Right ventricle myocardium inferior (tissue), 1 donor: ENCODE measurements at regions of chr1 and their contacts with region 1.

Region 1: DNA sequence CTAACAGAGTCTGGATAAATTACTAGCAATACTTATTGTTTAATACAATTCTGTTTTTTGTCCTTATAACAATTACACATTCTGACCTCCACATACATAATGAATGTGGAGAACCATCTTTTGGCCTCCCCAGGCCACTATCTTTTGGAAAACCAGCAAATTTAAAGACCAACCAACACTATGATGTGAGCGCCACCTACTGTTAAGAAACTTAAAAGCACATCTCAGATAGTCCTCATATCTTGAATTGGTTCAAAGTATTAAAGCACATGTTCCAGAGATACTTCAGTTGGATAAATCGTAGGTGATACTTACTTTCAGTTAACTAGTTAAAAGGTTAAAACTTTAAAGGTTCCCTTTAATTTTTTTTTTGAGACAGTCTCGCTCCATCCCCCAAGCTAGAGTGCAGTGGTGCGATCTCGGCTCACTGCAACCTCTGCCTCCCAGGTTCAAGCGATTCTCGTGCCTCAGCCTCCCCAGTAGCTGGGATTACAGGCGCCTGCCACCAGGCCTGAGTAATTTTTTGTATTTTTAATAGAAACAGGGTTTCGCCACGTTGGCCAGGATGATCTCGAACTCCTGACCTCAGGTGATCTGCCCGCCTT is 29.3 kb upstream of the USP1 start:
- DNase-seq: no peak
- ATAC-seq: peak; percentile 26

Region 2: DNA sequence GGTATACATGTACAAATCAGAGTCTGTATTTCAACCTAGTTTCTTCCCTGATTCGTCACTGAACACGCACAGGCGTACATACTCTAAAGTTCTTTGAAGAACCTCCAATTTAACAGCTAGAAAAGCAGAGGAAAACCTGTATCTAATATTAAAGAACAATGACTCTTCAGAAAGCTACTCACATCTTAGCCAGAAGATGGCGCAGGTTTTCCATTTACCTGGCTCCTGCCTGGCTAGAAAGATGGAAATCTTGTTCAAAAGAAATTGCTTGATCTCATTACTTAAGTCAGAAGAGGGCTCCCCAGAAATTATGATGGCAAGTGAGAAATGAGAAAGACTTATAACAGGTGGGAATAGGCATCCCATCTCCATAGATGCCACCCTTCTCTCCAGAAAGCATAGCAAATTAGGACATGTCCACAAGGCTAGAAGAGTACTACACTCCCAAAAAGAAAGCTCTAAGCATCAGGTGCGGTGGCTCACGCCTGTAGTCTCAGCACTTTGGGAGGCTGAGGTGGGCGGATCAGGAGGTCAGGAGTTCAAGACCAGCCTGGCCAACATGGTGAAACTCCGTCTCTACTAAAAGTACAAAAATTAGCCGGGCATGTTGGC is 231.8 kb before region 1 on chr1:
- intact Hi-C with region 1: loop called (anchors 1 kb)
- DNase-seq: no peak
- ATAC-seq: no peak

Region 3: GRCh38 chr1:62295921-62296491 is 111.5 kb before region 1 on chr1:
- intact Hi-C with region 1: loop called (anchors 10 kb)
- DNase-seq: no peak
- ATAC-seq: no peak

Region 4: DNA sequence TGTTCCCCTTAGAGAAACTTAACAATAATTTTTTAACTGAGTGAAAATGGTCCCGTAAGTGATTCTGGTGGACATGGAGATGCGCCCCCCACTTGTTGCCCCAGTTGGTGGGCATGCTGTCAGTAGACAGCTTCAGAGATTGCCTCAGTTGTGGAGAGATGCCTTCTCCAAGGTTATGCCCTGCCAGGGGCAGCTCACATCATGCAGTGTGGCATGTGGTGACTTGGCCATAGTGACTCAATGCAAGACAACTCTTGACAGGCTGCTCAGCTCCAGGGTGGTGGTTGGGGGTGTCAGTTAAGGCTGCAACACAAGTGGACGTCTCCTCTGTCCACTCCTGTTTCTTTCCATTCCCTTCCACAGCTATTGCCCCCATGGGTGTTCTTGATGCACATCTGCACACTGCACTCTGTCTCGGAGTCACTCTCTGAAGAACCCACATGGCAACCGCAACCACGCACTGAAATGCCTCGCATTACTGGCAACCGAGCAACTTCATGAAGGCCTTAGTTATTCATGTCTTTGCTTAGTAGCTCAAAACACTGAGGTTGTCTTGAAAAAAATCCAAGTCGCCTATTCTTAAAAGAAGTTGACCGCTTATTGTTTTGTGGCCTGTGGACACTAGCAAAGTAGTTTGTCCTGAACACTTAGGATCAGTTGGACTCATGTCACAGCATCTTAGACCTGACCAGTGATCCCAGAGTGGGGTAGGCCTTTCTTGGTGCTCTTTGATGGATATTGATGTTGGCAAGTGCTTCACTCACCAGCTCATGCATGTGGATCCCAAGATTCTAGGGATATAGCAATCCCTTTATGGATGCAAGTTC is 25.5 kb before region 1 on chr1:
- intact Hi-C with region 1: no loop called
- DNase-seq: no peak
- ATAC-seq: no peak

Region 5: DNA sequence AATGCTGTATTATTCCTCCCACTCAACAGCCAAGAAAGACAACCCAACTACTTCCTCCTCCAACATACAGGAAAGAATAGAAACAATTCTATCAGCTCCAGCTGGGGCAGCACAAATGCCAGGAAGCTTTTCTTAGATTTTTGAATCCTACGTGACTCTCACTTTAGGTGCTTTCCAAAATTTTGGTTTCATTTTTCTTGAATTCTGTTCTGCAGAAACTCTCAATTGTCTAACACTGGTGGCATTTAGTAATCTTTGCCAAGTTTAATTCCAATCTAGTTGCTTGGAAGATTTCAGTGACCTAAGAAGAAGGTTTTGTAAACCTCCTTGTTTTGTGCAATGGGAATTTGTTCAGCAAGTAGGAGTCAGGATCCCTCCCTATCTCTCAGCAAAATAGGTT is 317.7 kb after region 1 on chr1:
- intact Hi-C with region 1: no loop called
- DNase-seq: no peak
- ATAC-seq: peak; percentile 34